Activated CD8-positive, alpha-beta T cell treated with anti-CD3 and anti-CD28 coated beads for 36 hours (primary cell): ENCODE measurements at regions of chr21 and their contacts with region 1.

Region 1: DNA sequence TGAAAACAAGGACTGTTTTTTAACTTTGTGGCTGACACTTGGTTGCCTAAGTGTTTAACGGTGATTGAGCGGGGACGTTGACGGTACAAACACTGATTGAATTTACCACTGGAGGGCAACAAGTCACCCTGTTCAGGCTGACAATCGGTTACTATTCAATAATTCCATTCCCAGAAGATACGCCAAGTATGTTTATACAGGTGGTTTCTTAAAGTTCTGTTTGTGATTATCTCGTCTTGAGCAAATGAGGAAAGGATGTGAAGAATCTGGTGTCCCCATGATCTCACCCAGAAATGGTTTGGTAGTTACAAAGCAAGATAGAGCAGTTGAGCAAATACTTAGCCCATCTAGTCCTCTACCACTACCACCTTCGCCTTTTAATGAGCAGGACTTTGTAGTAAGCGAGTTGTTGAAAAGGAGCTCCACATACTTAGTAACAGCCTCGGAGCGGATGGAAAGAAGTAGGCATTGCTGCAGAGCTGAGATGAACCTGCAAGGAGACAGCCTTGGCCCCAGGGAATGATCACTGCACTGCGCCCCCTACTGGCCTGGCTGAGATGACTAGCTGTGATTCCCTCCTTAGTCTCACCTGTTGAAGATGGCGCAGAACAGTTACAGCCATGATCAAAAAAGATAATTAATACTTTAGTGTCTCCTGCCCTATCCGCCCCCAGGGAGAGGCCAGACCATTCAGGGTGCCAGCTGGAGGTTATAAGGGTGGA is 36.3 kb downstream of the IFNAR1 start:
- DNase-seq: peak; percentile 92
- ATAC-seq: peak; percentile 82
- H3K4me3 Mint-ChIP-seq: peak overlapping the region; percentile 73
- H3K27ac Mint-ChIP-seq: peak overlapping the region; percentile 69
- H3K4me1 Mint-ChIP-seq: peaks cover 17% of the 10 kb centered on the region
- H3K27me3 Mint-ChIP-seq: no peaks in the 10 kb centered on the region
- CTCF ChIP-seq: peak; percentile 97

Region 2: DNA sequence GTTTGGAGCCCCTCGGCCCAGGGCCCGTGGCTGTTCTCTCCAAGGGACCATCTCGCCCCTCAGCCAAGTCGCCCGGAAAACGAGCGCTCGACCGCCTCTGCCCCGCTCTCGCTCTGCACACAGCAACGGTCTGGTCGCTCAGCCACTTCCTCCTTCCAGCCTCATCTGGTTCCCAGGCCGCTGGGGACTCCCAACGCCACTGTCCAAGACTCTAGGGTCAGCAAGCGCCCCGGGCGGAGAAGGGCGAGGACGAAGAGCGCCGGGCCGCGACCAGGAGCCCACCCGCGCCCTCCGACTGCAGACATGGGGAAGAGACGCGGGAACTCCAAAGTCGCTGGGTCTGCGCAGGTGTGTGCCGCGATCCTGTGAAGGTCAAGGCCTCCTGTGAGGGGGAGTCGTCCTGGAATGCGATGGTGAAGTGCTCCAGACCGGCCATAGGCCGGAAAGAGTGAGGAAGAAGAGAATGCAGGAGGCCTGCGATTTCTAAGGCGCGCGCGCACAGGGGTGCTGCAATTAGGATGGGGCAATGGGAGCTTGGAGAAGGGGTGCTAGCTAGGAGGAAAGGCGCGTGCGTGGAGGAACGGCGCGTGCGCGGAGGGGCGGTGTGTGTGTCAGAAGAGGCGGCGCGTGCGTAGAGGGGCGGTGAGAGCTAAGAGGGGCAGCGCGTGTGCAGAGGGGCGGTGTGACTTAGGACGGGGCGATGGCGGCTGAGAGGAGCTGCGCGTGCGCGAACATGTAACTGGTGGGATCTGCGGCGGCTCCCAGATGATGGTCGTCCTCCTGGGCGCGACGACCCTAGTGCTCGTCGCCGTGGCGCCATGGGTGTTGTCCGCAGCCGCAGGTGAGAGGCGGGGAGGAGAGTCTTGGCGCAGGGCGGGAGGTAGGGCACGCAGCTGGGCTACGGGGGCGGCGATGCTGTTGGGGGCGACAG is 36.5 kb before region 1 on chr21 and contains the start of gene IFNAR1:
- CTCF ChIA-PET with region 1: interaction called, 34 read pairs
- POLR2A ChIA-PET with region 1: interaction called, 7 read pairs
- intact Hi-C with region 1: no loop called
- DNase-seq: peak; percentile 100
- ATAC-seq: peak; percentile 93
- H3K4me3 Mint-ChIP-seq: no peak within 1 kb of the TSS
- H3K27ac Mint-ChIP-seq: no peak within 1 kb of the TSS
- H3K4me1 Mint-ChIP-seq: peaks cover 27% of the 10 kb centered on the region
- H3K27me3 Mint-ChIP-seq: no peaks in the 10 kb centered on the region
- CTCF ChIP-seq: no peak
- total RNA-seq, gene IFNAR1: 25.6 to 30.3 TPM

Region 3: DNA sequence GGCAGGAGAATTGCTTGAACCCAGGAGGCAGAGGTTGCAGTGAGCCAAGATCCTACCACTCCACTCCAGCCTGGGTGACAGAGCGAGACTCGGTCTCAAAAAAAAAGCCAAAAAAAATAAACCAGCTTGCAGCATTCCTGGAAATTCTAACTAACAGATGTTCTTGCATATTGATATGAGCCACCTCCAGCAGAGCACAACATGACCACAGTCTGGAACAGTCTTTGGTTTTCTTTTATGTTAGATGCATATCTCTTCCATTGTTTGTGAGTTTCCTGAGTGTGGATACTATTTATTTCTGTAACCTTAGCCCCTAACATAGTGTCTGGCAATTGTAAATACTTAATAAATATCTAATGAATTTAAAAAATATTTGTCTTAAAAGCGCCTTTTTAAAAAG is 12.3 kb before region 1 on chr21:
- CTCF ChIA-PET with region 1: interaction called, 35 read pairs
- POLR2A ChIA-PET with region 1: interaction called, 4 read pairs
- intact Hi-C with region 1: no loop called
- DNase-seq: no peak
- ATAC-seq: no peak
- H3K4me3 Mint-ChIP-seq: no peak overlapping the region
- H3K27ac Mint-ChIP-seq: no peak overlapping the region
- H3K4me1 Mint-ChIP-seq: peaks cover 10% of the 10 kb centered on the region
- H3K27me3 Mint-ChIP-seq: no peaks in the 10 kb centered on the region
- CTCF ChIP-seq: no peak

Region 4: DNA sequence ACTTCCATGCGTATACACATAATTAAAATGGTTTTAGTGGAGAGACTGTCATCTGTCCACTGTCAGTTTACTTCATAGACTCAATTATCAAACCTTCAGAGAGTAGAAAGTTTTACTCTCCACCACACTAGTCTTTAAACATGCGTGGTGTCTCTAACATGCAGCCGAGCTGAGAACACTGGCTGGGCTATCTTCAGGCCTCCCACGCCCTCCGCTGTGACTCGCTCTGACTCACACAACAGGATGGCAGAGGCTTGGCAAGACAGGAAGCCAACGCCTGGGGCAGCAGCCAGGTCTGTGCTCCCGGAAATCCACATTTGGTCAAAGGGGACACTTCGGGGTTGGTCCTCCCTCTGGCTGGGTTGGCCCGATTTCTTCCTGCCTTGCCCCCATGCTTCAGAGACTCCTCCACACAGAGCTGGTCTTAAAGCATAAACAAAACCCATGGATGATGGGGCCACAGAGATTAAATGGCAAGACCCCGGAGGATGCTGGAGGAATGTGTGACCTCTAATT is 19.5 kb after region 1 on chr21:
- CTCF ChIA-PET with region 1: interaction called, 35 read pairs
- POLR2A ChIA-PET with region 1: interaction called, 6 read pairs
- intact Hi-C with region 1: no loop called
- DNase-seq: peak; percentile 99
- ATAC-seq: peak; percentile 77
- H3K4me3 Mint-ChIP-seq: peak overlapping the region; percentile 39
- H3K27ac Mint-ChIP-seq: peak overlapping the region; percentile 79
- H3K4me1 Mint-ChIP-seq: peaks cover 61% of the 10 kb centered on the region
- H3K27me3 Mint-ChIP-seq: peaks cover 2% of the 10 kb centered on the region
- CTCF ChIP-seq: no peak

Region 5: DNA sequence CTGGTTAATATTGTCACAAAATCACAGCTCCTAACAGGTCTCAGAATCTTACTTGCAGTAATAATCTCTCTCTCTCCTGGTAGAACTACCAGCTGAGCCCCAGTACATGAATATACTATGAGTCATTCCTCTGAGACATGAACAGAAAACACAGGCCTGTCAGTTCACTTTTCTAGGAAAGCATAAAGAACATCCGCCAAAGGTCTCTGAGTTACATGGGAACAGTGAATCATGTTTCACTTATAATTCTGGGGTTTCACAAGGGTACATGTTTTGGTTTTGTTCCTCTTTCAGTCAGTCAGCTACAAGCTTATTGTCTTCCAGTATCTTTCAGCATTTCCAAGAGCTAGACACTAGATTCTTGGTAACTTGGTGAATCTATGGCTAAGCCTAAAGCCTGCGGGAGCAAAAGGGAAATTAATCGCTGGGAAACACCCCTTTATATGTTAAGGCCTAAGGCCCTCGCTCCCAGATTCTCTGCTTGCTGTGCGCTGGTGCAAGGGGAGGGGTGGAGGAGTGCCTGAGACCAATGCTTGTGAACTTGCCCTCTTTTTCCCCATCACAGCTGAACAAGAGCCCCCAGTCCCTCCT is 73.8 kb after region 1 on chr21:
- CTCF ChIA-PET with region 1: interaction called, 29 read pairs
- POLR2A ChIA-PET with region 1: interaction called, 3 read pairs
- intact Hi-C with region 1: loop called (anchors 5 kb)
- DNase-seq: peak; percentile 51
- ATAC-seq: peak; percentile 94
- H3K4me3 Mint-ChIP-seq: peak overlapping the region; percentile 1
- H3K27ac Mint-ChIP-seq: peak overlapping the region; percentile 77
- H3K4me1 Mint-ChIP-seq: peaks cover 26% of the 10 kb centered on the region
- H3K27me3 Mint-ChIP-seq: no peaks in the 10 kb centered on the region
- CTCF ChIP-seq: no peak

Region 6: GRCh38 chr21:33598051-33598450 is 237.0 kb after region 1 on chr21:
- CTCF ChIA-PET with region 1: no interaction called
- POLR2A ChIA-PET with region 1: no interaction called
- intact Hi-C with region 1: no loop called
- DNase-seq: no peak
- ATAC-seq: no peak
- H3K4me3 Mint-ChIP-seq: no peak overlapping the region
- H3K27ac Mint-ChIP-seq: no peak overlapping the region
- H3K4me1 Mint-ChIP-seq: no peaks in the 10 kb centered on the region
- H3K27me3 Mint-ChIP-seq: no peaks in the 10 kb centered on the region
- CTCF ChIP-seq: no peak

Region 7: GRCh38 chr21:33634254-33634653 is 273.2 kb after region 1 on chr21:
- CTCF ChIA-PET with region 1: no interaction called
- POLR2A ChIA-PET with region 1: no interaction called
- intact Hi-C with region 1: no loop called
- DNase-seq: no peak
- ATAC-seq: no peak
- H3K4me3 Mint-ChIP-seq: no peak overlapping the region
- H3K27ac Mint-ChIP-seq: no peak overlapping the region
- H3K4me1 Mint-ChIP-seq: peaks cover 15% of the 10 kb centered on the region
- H3K27me3 Mint-ChIP-seq: no peaks in the 10 kb centered on the region
- CTCF ChIP-seq: no peak